CD4-positive, alpha-beta T cell (primary cell): ENCODE measurements at regions of chr16 and their contacts with region 1.

Region 1: GRCh38 chr16:50747207-50747956 is 5.5 kb downstream of the CYLD start:
- DNase-seq: peak in 5 of 14 experiments; percentile 14 to 86 (median 78)
- ATAC-seq: peak; percentile 72
- H3K4me3 ChIP-seq: peak overlapping the region; percentile 80
- H3K4me3 Mint-ChIP-seq: peak overlapping the region; percentile 86
- H3K27ac ChIP-seq: peak overlapping the region; percentile 38 to 66
- H3K27ac Mint-ChIP-seq: peak overlapping the region; percentile 87
- H3K4me1 ChIP-seq: peaks cover 23% of the 10 kb centered on the region
- H3K4me1 Mint-ChIP-seq: peaks cover 80% of the 10 kb centered on the region
- H3K27me3 ChIP-seq: no peaks in the 10 kb centered on the region
- H3K27me3 Mint-ChIP-seq: no peaks in the 10 kb centered on the region
- CTCF ChIP-seq: peak; percentile 72

Region 2: GRCh38 chr16:50210266-50211038 is 536.9 kb before region 1 on chr16:
- CTCF ChIA-PET with region 1: interaction called, 3 read pairs
- POLR2A ChIA-PET with region 1: no interaction called
- intact Hi-C with region 1: loop called (anchors 5 kb)
- DNase-seq: peak; percentile 42 to 79 (median 58)
- ATAC-seq: peak; percentile 92
- H3K4me3 ChIP-seq: no peak overlapping the region
- H3K4me3 Mint-ChIP-seq: no peak overlapping the region
- H3K27ac ChIP-seq: peak overlapping the region in 1 of 2 donors; percentile 26
- H3K27ac Mint-ChIP-seq: peak overlapping the region; percentile 32
- H3K4me1 ChIP-seq: peaks cover 9% of the 10 kb centered on the region
- H3K4me1 Mint-ChIP-seq: peaks cover 50% of the 10 kb centered on the region
- H3K27me3 ChIP-seq: no peaks in the 10 kb centered on the region
- H3K27me3 Mint-ChIP-seq: no peaks in the 10 kb centered on the region
- CTCF ChIP-seq: peak; percentile 64

Region 3: GRCh38 chr16:50326949-50327402 is 420.4 kb before region 1 on chr16:
- CTCF ChIA-PET with region 1: interaction called, 4 read pairs
- POLR2A ChIA-PET with region 1: interaction called, 7 read pairs
- intact Hi-C with region 1: loop called in 1 of 2 experiments (anchors 2 kb)
- DNase-seq: peak; percentile 39 to 93 (median 62)
- ATAC-seq: peak; percentile 92
- H3K4me3 ChIP-seq: no peak overlapping the region
- H3K4me3 Mint-ChIP-seq: no peak overlapping the region
- H3K27ac ChIP-seq: peak overlapping the region in 1 of 2 donors; percentile 20
- H3K27ac Mint-ChIP-seq: peak overlapping the region; percentile 84
- H3K4me1 ChIP-seq: peaks cover 38% of the 10 kb centered on the region
- H3K4me1 Mint-ChIP-seq: peaks cover 64% of the 10 kb centered on the region
- H3K27me3 ChIP-seq: no peaks in the 10 kb centered on the region
- H3K27me3 Mint-ChIP-seq: no peaks in the 10 kb centered on the region
- CTCF ChIP-seq: peak; percentile 83

Region 4: GRCh38 chr16:50548125-50548908 is 199.1 kb before region 1 on chr16 and contains the start of gene NKD1:
- CTCF ChIA-PET with region 1: no interaction called
- POLR2A ChIA-PET with region 1: no interaction called
- intact Hi-C with region 1: loop called (anchors 2 kb)
- DNase-seq: peak; percentile 56 to 89 (median 71)
- ATAC-seq: peak; percentile 66
- H3K4me3 ChIP-seq: peak within 1 kb of the TSS; percentile 75
- H3K4me3 Mint-ChIP-seq: peak within 1 kb of the TSS; percentile 93
- H3K27ac ChIP-seq: peak within 1 kb of the TSS in 1 of 2 donors; percentile 65
- H3K27ac Mint-ChIP-seq: peak within 1 kb of the TSS; percentile 88
- H3K4me1 ChIP-seq: peaks cover 39% of the 10 kb centered on the region
- H3K4me1 Mint-ChIP-seq: peaks cover 48% of the 10 kb centered on the region
- H3K27me3 ChIP-seq: no peaks in the 10 kb centered on the region
- H3K27me3 Mint-ChIP-seq: no peaks in the 10 kb centered on the region
- CTCF ChIP-seq: no peak
- total RNA-seq, gene NKD1: 6.1 to 9.8 TPM

Region 5: GRCh38 chr16:50681021-50681885 is 66.1 kb before region 1 on chr16 and contains the start of gene SNX20:
- CTCF ChIA-PET with region 1: interaction called, 7 read pairs
- POLR2A ChIA-PET with region 1: interaction called, 167 read pairs
- intact Hi-C with region 1: loop called (anchors 2 kb)
- DNase-seq: peak in 13 of 14 experiments; percentile 57 to 90 (median 69)
- ATAC-seq: peak; percentile 82
- H3K4me3 ChIP-seq: peak within 1 kb of the TSS; percentile 96
- H3K4me3 Mint-ChIP-seq: peak within 1 kb of the TSS; percentile 97
- H3K27ac ChIP-seq: peak within 1 kb of the TSS; percentile 87 to 92
- H3K27ac Mint-ChIP-seq: peak within 1 kb of the TSS; percentile 84
- H3K4me1 ChIP-seq: peaks cover 91% of the 10 kb centered on the region
- H3K4me1 Mint-ChIP-seq: peaks cover 93% of the 10 kb centered on the region
- H3K27me3 ChIP-seq: no peaks in the 10 kb centered on the region
- H3K27me3 Mint-ChIP-seq: no peaks in the 10 kb centered on the region
- CTCF ChIP-seq: no peak
- total RNA-seq, gene SNX20: 26.6 TPM

Region 6: DNA sequence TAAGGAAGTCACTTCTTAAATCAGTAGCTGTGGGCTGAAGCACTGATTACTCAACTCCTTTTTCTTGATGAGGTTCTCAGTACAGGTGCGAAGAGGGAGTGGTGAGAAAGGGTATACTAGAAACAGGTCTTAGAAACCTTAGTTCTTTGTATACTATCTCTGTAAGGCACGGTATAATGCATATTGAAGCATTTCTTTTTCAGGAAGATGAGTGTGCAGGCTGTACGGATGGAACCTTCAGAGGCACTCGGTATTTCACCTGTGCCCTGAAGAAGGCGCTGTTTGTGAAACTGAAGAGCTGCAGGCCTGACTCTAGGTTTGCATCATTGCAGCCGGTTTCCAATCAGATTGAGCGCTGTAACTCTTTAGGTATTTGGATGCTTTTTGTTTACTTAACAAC is 33.7 kb after region 1 on chr16:
- CTCF ChIA-PET with region 1: interaction called, 3 read pairs
- POLR2A ChIA-PET with region 1: interaction called, 7 read pairs
- intact Hi-C with region 1: loop called in 1 of 2 experiments (anchors 5 kb)
- DNase-seq: peak in 4 of 14 experiments; percentile 18 to 61 (median 56)
- ATAC-seq: peak; percentile 77
- H3K4me3 ChIP-seq: no peak overlapping the region
- H3K4me3 Mint-ChIP-seq: peak overlapping the region; percentile 56
- H3K27ac ChIP-seq: peak overlapping the region; percentile 36 to 45
- H3K27ac Mint-ChIP-seq: peak overlapping the region; percentile 92
- H3K4me1 ChIP-seq: peaks cover 17% of the 10 kb centered on the region
- H3K4me1 Mint-ChIP-seq: peaks cover 72% of the 10 kb centered on the region
- H3K27me3 ChIP-seq: no peaks in the 10 kb centered on the region
- H3K27me3 Mint-ChIP-seq: no peaks in the 10 kb centered on the region
- CTCF ChIP-seq: peak; percentile 32

Region 7: GRCh38 chr16:50940275-50940854 is 193.0 kb after region 1 on chr16:
- CTCF ChIA-PET with region 1: no interaction called
- POLR2A ChIA-PET with region 1: no interaction called
- intact Hi-C with region 1: no loop called
- DNase-seq: no peak
- ATAC-seq: no peak
- H3K4me3 ChIP-seq: no peak overlapping the region
- H3K4me3 Mint-ChIP-seq: no peak overlapping the region
- H3K27ac ChIP-seq: no peak overlapping the region
- H3K27ac Mint-ChIP-seq: no peak overlapping the region
- H3K4me1 ChIP-seq: no peaks in the 10 kb centered on the region
- H3K4me1 Mint-ChIP-seq: no peaks in the 10 kb centered on the region
- H3K27me3 ChIP-seq: peaks cover 2 to 5% of the 10 kb centered on the region in 2 experiments
- H3K27me3 Mint-ChIP-seq: peaks cover 29% of the 10 kb centered on the region
- CTCF ChIP-seq: no peak

Region 8: GRCh38 chr16:50989047-50989446 is 241.7 kb after region 1 on chr16:
- CTCF ChIA-PET with region 1: no interaction called
- POLR2A ChIA-PET with region 1: no interaction called
- intact Hi-C with region 1: no loop called
- DNase-seq: no peak
- ATAC-seq: no peak
- H3K4me3 ChIP-seq: no peak overlapping the region
- H3K4me3 Mint-ChIP-seq: no peak overlapping the region
- H3K27ac ChIP-seq: no peak overlapping the region
- H3K27ac Mint-ChIP-seq: no peak overlapping the region
- H3K4me1 ChIP-seq: no peaks in the 10 kb centered on the region
- H3K4me1 Mint-ChIP-seq: no peaks in the 10 kb centered on the region
- H3K27me3 ChIP-seq: peaks cover 0 to 4% of the 10 kb centered on the region in 2 experiments
- H3K27me3 Mint-ChIP-seq: no peaks in the 10 kb centered on the region
- CTCF ChIP-seq: no peak